Aorta (tissue), 5 donors: ENCODE measurements at regions of chr17 and their contacts with region 1.

Region 1: DNA sequence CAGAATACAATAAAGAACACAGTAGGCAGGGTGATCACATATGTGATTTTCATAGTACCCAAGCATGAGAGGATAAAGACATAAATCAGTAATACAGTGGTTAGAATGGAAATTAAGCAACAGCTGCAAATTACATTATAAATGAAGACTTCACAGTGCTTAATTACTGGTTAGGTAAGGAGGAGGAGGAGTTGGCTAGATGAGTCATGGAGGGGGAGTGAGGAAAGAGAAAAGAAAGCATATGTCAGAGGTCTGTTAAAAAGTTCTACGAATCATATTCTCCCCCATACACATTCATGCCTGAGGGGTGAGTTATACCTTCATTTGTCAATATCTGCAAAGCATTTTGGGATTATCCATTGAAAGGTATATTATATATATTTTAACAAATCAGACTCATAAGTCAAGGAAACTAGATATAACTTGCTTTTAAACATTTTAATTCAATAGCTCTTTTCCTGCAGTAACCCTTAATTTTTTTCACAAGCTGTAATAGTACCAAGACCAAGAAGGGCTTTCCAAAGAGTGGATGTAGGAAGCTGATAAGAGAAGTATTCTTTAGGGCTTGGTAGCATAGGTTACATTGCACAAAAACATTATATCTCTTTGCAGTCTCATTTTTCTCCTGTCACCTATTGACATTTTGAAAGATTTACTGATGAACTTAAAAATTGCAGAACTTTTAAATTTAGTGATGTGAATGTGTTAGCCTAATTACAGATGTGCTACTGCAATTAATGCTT is 99.3 kb downstream of the STXBP4 start:
- DNase-seq: no peak
- ATAC-seq: no peak
- H3K4me3 ChIP-seq: no peak overlapping the region
- H3K27ac ChIP-seq: no peak overlapping the region
- H3K4me1 ChIP-seq: no peaks in the 10 kb centered on the region
- H3K27me3 ChIP-seq: no peaks in the 10 kb centered on the region

Region 2: GRCh38 chr17:55005520-55005919 is 62.3 kb before region 1 on chr17:
- intact Hi-C with region 1: loop called in 1 of 2 experiments (anchors 10 kb)
- DNase-seq: no peak
- ATAC-seq: no peak
- H3K4me3 ChIP-seq: no peak overlapping the region
- H3K27ac ChIP-seq: no peak overlapping the region
- H3K4me1 ChIP-seq: no peaks in the 10 kb centered on the region
- H3K27me3 ChIP-seq: no peaks in the 10 kb centered on the region